CD8-positive, alpha-beta memory T cell (primary cell): ENCODE measurements at regions of chr3 and their contacts with region 1.

Region 1: DNA sequence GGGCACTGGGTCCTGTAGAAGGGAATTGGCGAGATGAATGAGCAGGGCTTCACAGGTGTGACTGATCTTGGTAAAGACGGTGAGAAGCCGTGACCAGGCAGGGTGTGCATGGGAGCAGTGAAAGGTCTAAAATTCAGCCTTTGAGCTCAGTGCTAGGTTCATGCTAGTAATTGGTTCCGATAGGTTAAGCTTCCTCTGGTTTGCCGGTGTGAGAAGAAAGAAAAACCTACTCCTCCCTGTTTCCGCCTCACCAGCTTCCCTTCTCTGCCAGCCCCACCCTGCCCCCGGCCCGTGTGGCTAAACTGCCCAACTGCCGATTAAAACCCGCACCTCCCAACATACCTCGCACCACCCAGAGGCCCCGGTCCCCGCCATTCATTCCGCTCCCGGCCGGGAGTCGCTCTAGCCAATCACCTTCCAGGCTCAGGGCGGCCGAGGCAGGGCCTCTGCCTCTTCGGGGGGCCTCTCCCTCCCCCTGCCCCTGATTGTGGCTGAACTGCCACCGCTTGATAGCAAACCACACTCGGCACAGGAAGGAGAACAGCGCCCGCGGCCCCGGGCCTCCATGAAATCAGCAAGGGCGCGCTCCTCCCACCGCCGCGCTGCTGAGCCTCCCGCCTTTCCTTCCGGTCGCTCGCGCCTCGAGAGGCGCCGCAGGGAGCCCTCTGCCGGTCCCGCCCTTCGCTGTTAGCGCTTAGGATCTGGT is 7.3 kb upstream of the NRROS start:
- DNase-seq: peak; percentile 82 to 94 (median 92)
- H3K4me3 ChIP-seq: peak overlapping the region; percentile 66
- H3K4me3 Mint-ChIP-seq: peak overlapping the region; percentile 81 to 93 (median 84)
- H3K27ac ChIP-seq: peak overlapping the region; percentile 73
- H3K27ac Mint-ChIP-seq: peak overlapping the region; percentile 88 to 96 (median 96)
- H3K4me1 ChIP-seq: peaks cover 36% of the 10 kb centered on the region
- H3K4me1 Mint-ChIP-seq: peaks cover 46 to 60% (median 54%) of the 10 kb centered on the region in 3 donors
- H3K27me3 ChIP-seq: no peaks in the 10 kb centered on the region
- H3K27me3 Mint-ChIP-seq: no peaks in the 10 kb centered on the region

Region 2: DNA sequence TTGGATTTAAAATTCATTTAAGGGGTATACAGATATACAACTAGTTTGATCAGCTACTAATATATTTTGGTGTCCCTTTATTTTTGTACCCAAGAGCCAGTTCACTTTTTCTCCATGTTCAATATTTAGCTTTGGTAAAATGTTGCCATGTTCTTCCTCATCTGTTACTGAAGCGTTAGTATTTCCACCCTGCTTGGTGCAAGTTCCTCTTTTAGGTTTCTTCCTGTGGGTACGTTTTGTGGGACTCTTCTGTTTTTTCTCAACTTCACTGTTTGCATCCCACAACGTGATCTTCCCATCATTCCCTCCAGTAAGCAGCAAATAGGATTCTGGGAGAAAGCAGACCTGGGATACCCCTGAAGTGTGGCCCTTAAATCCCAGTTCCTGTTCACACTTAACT is 78.0 kb before region 1 on chr3:
- CTCF ChIA-PET with region 1: no interaction called
- POLR2A ChIA-PET with region 1: no interaction called
- DNase-seq: no peak
- H3K4me3 ChIP-seq: no peak overlapping the region
- H3K4me3 Mint-ChIP-seq: no peak overlapping the region
- H3K27ac ChIP-seq: no peak overlapping the region
- H3K27ac Mint-ChIP-seq: peak overlapping the region in 2 of 8 donors; percentile 11 to 71
- H3K4me1 ChIP-seq: no peaks in the 10 kb centered on the region
- H3K4me1 Mint-ChIP-seq: peaks cover 1 to 4% (median 3%) of the 10 kb centered on the region in 3 donors
- H3K27me3 ChIP-seq: no peaks in the 10 kb centered on the region
- H3K27me3 Mint-ChIP-seq: no peaks in the 10 kb centered on the region

Region 3: DNA sequence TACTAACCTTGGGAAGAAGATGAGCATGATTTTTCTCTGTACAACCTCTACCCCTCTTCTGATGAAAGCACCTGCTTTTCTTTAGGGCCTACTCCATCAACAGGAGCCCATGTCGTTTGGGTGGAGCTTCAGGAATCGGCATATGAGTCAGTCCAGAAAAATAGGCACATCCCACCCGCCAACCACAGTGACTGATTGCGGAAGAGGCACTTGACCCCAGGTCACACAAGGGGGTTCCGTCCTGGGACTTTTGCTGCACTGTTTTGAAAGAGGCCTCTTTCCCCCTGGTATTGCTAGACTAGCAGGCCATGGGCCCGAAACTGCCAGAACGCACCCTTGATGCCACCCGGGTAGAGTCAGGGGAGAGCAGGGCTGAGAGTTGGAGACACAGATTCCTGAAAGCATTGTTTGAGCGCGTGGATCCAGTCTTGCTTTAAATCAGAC is 12.0 kb before region 1 on chr3:
- CTCF ChIA-PET with region 1: interaction called, 7 read pairs
- POLR2A ChIA-PET with region 1: interaction called, 10 read pairs
- DNase-seq: no peak
- H3K4me3 ChIP-seq: no peak overlapping the region
- H3K4me3 Mint-ChIP-seq: peak overlapping the region in 2 of 7 donors; percentile 45 to 56
- H3K27ac ChIP-seq: no peak overlapping the region
- H3K27ac Mint-ChIP-seq: peak overlapping the region in 4 of 8 donors; percentile 4 to 87 (median 72)
- H3K4me1 ChIP-seq: peaks cover 13% of the 10 kb centered on the region
- H3K4me1 Mint-ChIP-seq: peaks cover 17 to 32% (median 22%) of the 10 kb centered on the region in 3 donors
- H3K27me3 ChIP-seq: no peaks in the 10 kb centered on the region
- H3K27me3 Mint-ChIP-seq: no peaks in the 10 kb centered on the region